ENCODE measurements at regions of chr2 and their contacts with region 1.

Region 1: GRCh38 chr2:53970724-53971602 is at the start of gene PSME4:
- DNase-seq: peak; percentile 89 to 94 (median 89)
- H3K4me3 ChIP-seq: peak within 1 kb of the TSS; percentile 97 to 99
- H3K4me3 Mint-ChIP-seq: peak within 1 kb of the TSS; percentile 89 to 100 (median 96)
- H3K27ac ChIP-seq: peak within 1 kb of the TSS; percentile 90
- H3K27ac Mint-ChIP-seq: peak within 1 kb of the TSS; percentile 93 to 99 (median 98)
- H3K4me1 ChIP-seq: peaks cover 51% of the 10 kb centered on the region
- H3K4me1 Mint-ChIP-seq: peaks cover 41 to 67% (median 48%) of the 10 kb centered on the region in 4 donors
- H3K27me3 ChIP-seq: no peaks in the 10 kb centered on the region
- H3K27me3 Mint-ChIP-seq: no peaks in the 10 kb centered on the region
- total RNA-seq, gene PSME4: 41.7 to 49.9 TPM

Region 2: DNA sequence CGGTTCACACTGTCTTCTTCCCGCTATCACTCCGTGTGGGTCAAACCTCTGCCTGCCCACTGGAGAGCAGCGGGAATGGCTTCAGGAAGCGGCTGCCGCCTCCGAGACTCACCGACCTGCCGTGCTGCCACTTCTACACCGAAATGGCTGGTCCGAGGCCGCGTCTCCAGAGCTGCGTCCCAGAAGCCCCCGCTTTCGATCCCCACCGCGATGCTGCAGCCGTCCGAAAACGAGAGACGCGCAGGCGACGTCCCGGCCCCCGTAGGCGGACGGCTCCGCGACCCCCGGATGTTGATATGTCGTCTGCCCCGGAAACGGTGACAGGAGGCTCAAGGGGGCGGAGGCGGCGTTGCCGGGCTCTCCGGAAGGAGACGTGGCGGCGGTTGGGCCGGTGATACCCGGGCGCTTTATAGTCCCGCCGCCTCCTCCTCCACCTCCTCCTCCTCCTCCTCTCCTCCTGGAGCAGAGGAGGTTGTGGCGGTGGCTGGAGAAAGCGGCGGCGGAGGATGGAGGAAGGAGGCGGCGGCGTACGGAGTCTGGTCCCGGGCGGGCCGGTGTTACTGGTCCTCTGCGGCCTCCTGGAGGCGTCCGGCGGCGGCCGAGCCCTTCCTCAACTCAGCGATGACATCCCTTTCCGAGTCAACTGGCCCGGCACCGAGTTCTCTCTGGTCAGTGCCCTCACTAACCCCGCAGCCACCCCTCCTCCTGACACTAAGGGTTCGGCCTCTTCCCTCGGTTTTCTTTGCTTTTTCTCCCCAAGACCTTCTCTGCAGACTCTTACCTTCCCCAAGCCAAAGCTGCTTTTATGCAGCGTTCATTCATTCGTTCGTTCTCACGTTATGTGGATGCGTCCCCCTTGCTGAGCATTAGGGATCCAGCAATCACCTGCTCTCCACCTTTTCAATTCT is 184.0 kb before region 1 on chr2 and contains the starts of genes ASB3 and ERLEC1:
- CTCF ChIA-PET with region 1: no interaction called
- POLR2A ChIA-PET with region 1: interaction called, 4 read pairs
- intact Hi-C with region 1: loop called (anchors 10 kb)
- DNase-seq: peak; percentile 85 to 90 (median 87)
- H3K4me3 ChIP-seq: peak within 1 kb of the TSS; percentile 80 to 96
- H3K4me3 Mint-ChIP-seq: peak within 1 kb of the TSS; percentile 91 to 100 (median 96)
- H3K27ac ChIP-seq: peak within 1 kb of the TSS; percentile 86
- H3K27ac Mint-ChIP-seq: peak within 1 kb of the TSS; percentile 90 to 99 (median 95)
- H3K4me1 ChIP-seq: peaks cover 49% of the 10 kb centered on the region
- H3K4me1 Mint-ChIP-seq: peaks cover 36 to 73% (median 52%) of the 10 kb centered on the region in 4 donors
- H3K27me3 ChIP-seq: no peaks in the 10 kb centered on the region
- H3K27me3 Mint-ChIP-seq: no peaks in the 10 kb centered on the region
- total RNA-seq, gene ASB3: 40.1 to 43.5 TPM
- total RNA-seq, gene ERLEC1: 32.4 to 33.6 TPM

Region 3: GRCh38 chr2:53985646-53986045 is 14.7 kb after region 1 on chr2:
- CTCF ChIA-PET with region 1: no interaction called
- POLR2A ChIA-PET with region 1: interaction called, 18 read pairs
- intact Hi-C with region 1: no loop called
- DNase-seq: no peak
- H3K4me3 ChIP-seq: no peak overlapping the region
- H3K4me3 Mint-ChIP-seq: no peak overlapping the region
- H3K27ac ChIP-seq: no peak overlapping the region
- H3K27ac Mint-ChIP-seq: peak overlapping the region in 4 of 7 donors; percentile 6 to 74 (median 50)
- H3K4me1 ChIP-seq: peaks cover 11% of the 10 kb centered on the region
- H3K4me1 Mint-ChIP-seq: peaks cover 15 to 23% (median 18%) of the 10 kb centered on the region in 4 donors
- H3K27me3 ChIP-seq: no peaks in the 10 kb centered on the region
- H3K27me3 Mint-ChIP-seq: no peaks in the 10 kb centered on the region

Region 4: GRCh38 chr2:53994818-53995808 is 24.1 kb after region 1 on chr2:
- CTCF ChIA-PET with region 1: no interaction called
- POLR2A ChIA-PET with region 1: interaction called, 44 read pairs
- intact Hi-C with region 1: loop called (anchors 1 kb)
- DNase-seq: peak; percentile 41 to 84 (median 76)
- H3K4me3 ChIP-seq: peak overlapping the region in 1 of 2 donors; percentile 40
- H3K4me3 Mint-ChIP-seq: peak overlapping the region; percentile 67 to 85 (median 72)
- H3K27ac ChIP-seq: peak overlapping the region; percentile 20
- H3K27ac Mint-ChIP-seq: peak overlapping the region; percentile 76 to 94 (median 89)
- H3K4me1 ChIP-seq: peaks cover 46% of the 10 kb centered on the region
- H3K4me1 Mint-ChIP-seq: peaks cover 17 to 34% (median 25%) of the 10 kb centered on the region in 4 donors
- H3K27me3 ChIP-seq: no peaks in the 10 kb centered on the region
- H3K27me3 Mint-ChIP-seq: no peaks in the 10 kb centered on the region

Region 5: DNA sequence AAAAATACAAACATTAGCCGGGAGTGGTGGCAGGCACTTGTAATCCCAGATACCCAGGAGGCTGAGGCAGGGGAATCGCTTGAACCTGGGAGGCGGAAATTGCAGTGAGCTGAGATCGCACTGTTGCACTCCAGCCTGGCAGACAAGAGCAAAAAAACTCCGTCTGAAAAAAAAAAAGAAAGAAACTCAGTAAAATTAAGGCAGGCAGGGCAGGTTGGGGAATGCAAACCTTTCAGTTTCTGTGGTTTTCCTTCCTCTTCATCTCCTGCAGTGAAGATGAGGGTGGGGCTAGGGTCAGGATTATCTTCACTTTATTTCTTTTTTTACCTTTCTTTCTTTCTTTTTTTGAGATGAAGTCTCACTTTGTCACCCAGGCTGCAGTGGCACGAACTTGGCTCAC is 43.0 kb after region 1 on chr2:
- CTCF ChIA-PET with region 1: interaction called, 4 read pairs
- POLR2A ChIA-PET with region 1: interaction called, 12 read pairs
- intact Hi-C with region 1: loop called (anchors 5 kb)
- DNase-seq: peak in 4 of 5 donors; percentile 11 to 26 (median 15)
- H3K4me3 ChIP-seq: no peak overlapping the region
- H3K4me3 Mint-ChIP-seq: peak overlapping the region; percentile 67 to 85 (median 77)
- H3K27ac ChIP-seq: peak overlapping the region; percentile 39
- H3K27ac Mint-ChIP-seq: peak overlapping the region; percentile 84 to 97 (median 91)
- H3K4me1 ChIP-seq: peaks cover 25% of the 10 kb centered on the region
- H3K4me1 Mint-ChIP-seq: peaks cover 23 to 44% (median 30%) of the 10 kb centered on the region in 4 donors
- H3K27me3 ChIP-seq: no peaks in the 10 kb centered on the region
- H3K27me3 Mint-ChIP-seq: no peaks in the 10 kb centered on the region

Region 6: DNA sequence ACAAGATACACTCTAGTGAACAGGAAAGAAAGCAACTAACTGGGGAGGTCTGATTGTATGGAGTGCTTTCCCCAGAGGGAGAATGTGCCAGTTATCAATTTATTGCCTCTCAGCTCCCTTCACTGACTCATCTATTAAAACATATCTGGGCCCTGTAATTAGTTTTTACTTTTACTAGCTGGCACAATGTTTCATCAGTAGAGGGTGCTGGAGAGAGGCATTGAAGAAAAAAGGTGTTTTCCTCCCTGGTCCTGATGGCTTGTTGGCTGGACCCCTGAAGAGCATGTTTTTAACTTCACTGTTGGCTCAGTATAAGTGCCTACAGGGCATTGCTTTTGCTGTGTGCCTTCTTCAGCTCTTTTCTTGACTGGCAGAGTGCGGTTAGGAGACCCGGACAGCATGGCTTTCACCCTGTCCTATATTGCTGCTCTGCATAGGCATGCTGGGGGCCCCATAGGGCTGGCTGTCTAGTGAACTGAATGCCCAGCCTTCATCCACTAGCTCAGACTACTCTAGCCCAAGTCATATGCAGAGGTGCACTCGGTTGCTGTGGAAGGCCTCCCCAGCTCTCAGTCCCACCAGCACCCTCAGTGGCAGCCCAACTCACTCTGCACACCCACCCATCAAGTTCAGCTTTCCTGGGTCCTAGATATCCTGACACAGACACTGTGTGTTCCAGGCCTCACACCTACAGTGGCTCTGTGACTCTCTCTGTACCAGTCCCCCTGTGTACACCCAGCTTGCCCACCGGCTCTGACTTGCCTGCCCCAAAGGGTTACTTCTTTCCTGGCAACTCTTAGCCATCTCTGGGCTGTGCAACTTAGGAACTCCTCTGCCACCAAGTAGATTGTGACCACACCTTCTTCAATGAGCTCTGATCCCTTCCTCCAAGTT is 82.1 kb after region 1 on chr2:
- CTCF ChIA-PET with region 1: interaction called, 7 read pairs
- POLR2A ChIA-PET with region 1: interaction called, 4 read pairs
- intact Hi-C with region 1: loop called (anchors 5 kb)
- DNase-seq: no peak
- H3K4me3 ChIP-seq: no peak overlapping the region
- H3K4me3 Mint-ChIP-seq: peak overlapping the region in 3 of 8 donors; percentile 64 to 85 (median 74)
- H3K27ac ChIP-seq: peak overlapping the region; percentile 34
- H3K27ac Mint-ChIP-seq: peak overlapping the region; percentile 73 to 99 (median 88)
- H3K4me1 ChIP-seq: peaks cover 27% of the 10 kb centered on the region
- H3K4me1 Mint-ChIP-seq: peaks cover 22 to 34% (median 28%) of the 10 kb centered on the region in 4 donors
- H3K27me3 ChIP-seq: no peaks in the 10 kb centered on the region
- H3K27me3 Mint-ChIP-seq: no peaks in the 10 kb centered on the region

Region 7: GRCh38 chr2:54115284-54116137 is 144.5 kb after region 1 on chr2 and contains the start of gene ACYP2:
- CTCF ChIA-PET with region 1: no interaction called
- POLR2A ChIA-PET with region 1: interaction called, 30 read pairs
- intact Hi-C with region 1: loop called (anchors 2 kb)
- DNase-seq: peak; percentile 89 to 92 (median 89)
- H3K4me3 ChIP-seq: peak within 1 kb of the TSS; percentile 77 to 83
- H3K4me3 Mint-ChIP-seq: peak within 1 kb of the TSS; percentile 94 to 99 (median 97)
- H3K27ac ChIP-seq: peak within 1 kb of the TSS; percentile 93
- H3K27ac Mint-ChIP-seq: peak within 1 kb of the TSS; percentile 99 to 100 (median 99)
- H3K4me1 ChIP-seq: peaks cover 17% of the 10 kb centered on the region
- H3K4me1 Mint-ChIP-seq: peaks cover 12 to 27% (median 16%) of the 10 kb centered on the region in 4 donors
- H3K27me3 ChIP-seq: no peaks in the 10 kb centered on the region
- H3K27me3 Mint-ChIP-seq: no peaks in the 10 kb centered on the region
- total RNA-seq, gene ACYP2: 13.1 to 16.9 TPM

Measured in CD4-positive, alpha-beta memory T cell (primary cell).